Heart right ventricle (tissue), 16 donors: ENCODE measurements at regions of chr5 and their contacts with region 1.

Region 1: DNA sequence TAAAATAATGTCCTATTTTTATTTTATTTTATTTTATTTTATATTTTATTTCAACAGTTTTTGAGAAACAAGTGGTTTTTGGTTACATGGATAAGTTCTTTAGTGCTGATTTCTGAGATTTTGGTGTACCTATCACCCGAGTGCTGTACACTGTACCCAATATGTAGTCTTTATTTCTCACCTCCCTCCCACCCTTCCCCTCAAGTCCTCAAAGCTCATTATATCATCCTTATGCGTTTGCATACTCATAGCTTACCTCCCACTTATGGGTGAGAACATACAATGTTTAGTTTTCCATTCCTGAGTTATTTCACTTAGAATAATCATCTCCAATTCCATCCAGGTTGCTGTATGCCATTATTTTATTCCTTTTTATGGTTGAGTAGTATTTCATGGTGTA is 63.5 kb downstream of the ARRDC3 start:
- DNase-seq: no peak
- ATAC-seq: no peak
- H3K4me3 ChIP-seq: no peak overlapping the region
- H3K27ac ChIP-seq: no peak overlapping the region
- H3K4me1 ChIP-seq: peaks cover 0 to 14% (median 0%) of the 10 kb centered on the region in 9 donors
- H3K27me3 ChIP-seq: no peaks in the 10 kb centered on the region
- CTCF ChIP-seq: no peak

Region 2: GRCh38 chr5:91366571-91366970 is 46.9 kb after region 1 on chr5:
- intact Hi-C with region 1: loop called in 3 of 10 experiments (anchors 5 to 10 kb)
- DNase-seq: no peak
- ATAC-seq: no peak
- H3K4me3 ChIP-seq: no peak overlapping the region
- H3K27ac ChIP-seq: no peak overlapping the region
- H3K4me1 ChIP-seq: peaks cover 0 to 30% (median 8%) of the 10 kb centered on the region in 9 donors
- H3K27me3 ChIP-seq: no peaks in the 10 kb centered on the region
- CTCF ChIP-seq: no peak